H1 (cell line): ENCODE measurements at regions of chr17 and their contacts with region 1.

Region 1: GRCh38 chr17:32253117-32253611 is 12.5 kb upstream of the RHBDL3 start:
- DNase-seq: peak; percentile 59 to 92
- H3K4me3 ChIP-seq: no peak overlapping the region
- H3K27ac ChIP-seq: no peak overlapping the region
- H3K4me1 ChIP-seq: peaks cover 0 to 2% (median 1%) of the 10 kb centered on the region in 4 experiments; a peak in 4 of 7 replicates
- H3K27me3 ChIP-seq: no peaks in the 10 kb centered on the region; a peak in 1 of 7 replicates
- CTCF ChIP-seq: peak; percentile 98 to 99 (median 98)
- EP300 ChIP-seq: no peak
- POLR2A ChIP-seq: no peak
- RAD21 ChIP-seq: peak; percentile 100

Region 2: DNA sequence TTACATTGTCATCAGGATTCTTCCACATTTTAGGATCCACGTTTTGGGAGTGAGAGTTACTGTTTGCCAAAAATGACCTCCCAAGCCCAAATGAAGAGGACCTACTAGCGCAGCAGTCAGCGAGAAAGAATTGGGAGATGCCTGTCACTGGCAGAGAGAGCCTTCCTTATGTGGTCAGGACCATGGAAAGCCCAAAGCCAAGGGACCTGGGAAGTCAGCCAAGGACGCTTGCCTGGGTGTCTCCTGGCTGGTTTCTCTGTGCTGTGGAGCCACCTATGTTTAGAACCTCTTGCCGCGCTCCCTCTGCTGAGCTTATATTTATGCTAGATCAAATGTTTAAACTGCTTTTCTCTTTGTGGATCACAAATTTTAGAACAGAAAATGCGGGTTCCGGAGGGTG is 12.4 kb before region 1 on chr17:
- CTCF ChIA-PET with region 1: interaction called, 23 read pairs
- POLR2A ChIA-PET with region 1: interaction called, 3 read pairs
- DNase-seq: no peak
- H3K4me3 ChIP-seq: no peak overlapping the region
- H3K27ac ChIP-seq: no peak overlapping the region
- H3K4me1 ChIP-seq: peaks cover 0 to 8% (median 2%) of the 10 kb centered on the region in 4 experiments; a peak in 5 of 7 replicates
- H3K27me3 ChIP-seq: no peaks in the 10 kb centered on the region
- CTCF ChIP-seq: peak in 2 of 3 experiments; percentile 16 to 30; a peak in 2 of 4 replicates
- EP300 ChIP-seq: no peak
- POLR2A ChIP-seq: no peak
- RAD21 ChIP-seq: peak; percentile 32 to 58; a peak in 3 of 4 replicates

Region 3: DNA sequence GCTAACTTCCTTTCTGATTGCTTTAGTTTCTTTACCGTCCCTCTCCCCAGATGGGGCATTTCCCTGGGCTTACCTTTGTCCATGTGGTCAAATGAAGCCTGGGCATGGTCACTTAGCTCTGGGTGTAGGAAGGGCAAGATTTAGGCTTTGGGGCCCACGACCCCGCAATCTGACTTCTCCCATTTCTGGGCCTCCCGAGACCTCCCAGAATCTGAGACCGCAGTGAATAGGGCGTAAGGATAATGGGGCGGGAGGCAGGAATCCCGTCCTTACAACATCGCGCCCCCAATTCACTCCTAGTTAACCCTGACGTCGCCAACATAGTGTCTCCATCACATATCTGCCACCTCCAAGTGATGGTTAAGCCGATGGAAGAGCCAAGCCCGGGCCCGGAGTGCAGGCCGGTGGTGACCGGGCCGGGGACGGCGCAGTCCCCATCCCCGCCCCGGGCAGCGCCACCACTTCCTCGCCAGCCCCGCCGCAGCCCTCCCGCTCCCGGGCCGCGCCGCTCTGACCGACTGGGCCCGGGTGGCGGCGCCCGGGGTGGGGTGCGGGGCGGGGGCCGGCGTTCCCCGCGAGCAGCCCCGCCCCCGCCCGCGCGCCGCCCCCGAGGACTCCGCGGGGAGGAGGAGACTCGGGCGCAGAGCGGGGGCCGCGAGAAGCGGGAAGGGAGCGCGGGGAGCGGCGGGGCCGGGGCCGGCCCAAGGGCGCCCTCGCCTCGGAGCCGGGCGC is 12.2 kb after region 1 on chr17 and contains the start of gene RHBDL3:
- CTCF ChIA-PET with region 1: interaction called, 45 read pairs
- POLR2A ChIA-PET with region 1: no interaction called
- DNase-seq: no peak
- H3K4me3 ChIP-seq: peak within 1 kb of the TSS; percentile 42 to 87 (median 67)
- H3K27ac ChIP-seq: no peak within 1 kb of the TSS
- H3K4me1 ChIP-seq: peaks cover 7 to 24% (median 16%) of the 10 kb centered on the region in 4 experiments
- H3K27me3 ChIP-seq: peaks cover 0 to 34% (median 29%) of the 10 kb centered on the region in 4 experiments; a peak in 5 of 7 replicates
- CTCF ChIP-seq: no peak
- EP300 ChIP-seq: no peak
- POLR2A ChIP-seq: no peak
- RAD21 ChIP-seq: no peak
- total RNA-seq, gene RHBDL3: 11.8 and 12.2 TPM in 2 replicates

Region 4: DNA sequence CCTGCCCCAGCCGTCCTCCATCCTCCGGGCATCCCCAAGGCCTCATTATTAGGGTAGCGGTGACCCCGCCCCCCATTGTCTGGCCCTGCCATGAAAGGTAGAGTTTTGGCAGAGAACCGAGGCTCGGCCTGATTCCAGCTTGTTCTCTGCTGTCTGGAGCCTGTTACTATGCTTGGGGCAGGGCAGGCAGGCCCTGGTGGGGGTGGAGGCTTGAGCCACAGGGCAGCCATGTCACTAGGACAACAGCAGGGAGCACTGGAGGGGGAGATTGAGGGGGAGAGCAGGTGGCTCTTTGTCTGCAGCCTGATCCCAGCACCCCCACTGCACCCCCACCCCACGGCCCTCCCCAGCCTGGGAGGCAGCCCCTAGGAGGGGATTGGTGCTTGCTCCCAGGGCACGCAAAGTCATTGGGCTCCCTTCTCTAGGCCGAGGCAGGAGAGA is 27.9 kb after region 1 on chr17:
- CTCF ChIA-PET with region 1: interaction called, 11 read pairs
- POLR2A ChIA-PET with region 1: no interaction called
- DNase-seq: peak in 1 of 2 experiments; percentile 82
- H3K4me3 ChIP-seq: peak overlapping the region in 2 of 4 experiments; percentile 20 to 22; a peak in 1 of 8 replicates
- H3K27ac ChIP-seq: no peak overlapping the region
- H3K4me1 ChIP-seq: peaks cover 8 to 42% (median 32%) of the 10 kb centered on the region in 4 experiments
- H3K27me3 ChIP-seq: peaks cover 0 to 2% (median 0%) of the 10 kb centered on the region in 4 experiments; a peak in 2 of 7 replicates
- CTCF ChIP-seq: no peak
- EP300 ChIP-seq: no peak
- POLR2A ChIP-seq: no peak; a peak in 1 of 3 replicates
- RAD21 ChIP-seq: no peak

Region 5: GRCh38 chr17:32286518-32286900 is 33.3 kb after region 1 on chr17:
- CTCF ChIA-PET with region 1: interaction called, 17 read pairs
- POLR2A ChIA-PET with region 1: no interaction called
- DNase-seq: no peak
- H3K4me3 ChIP-seq: no peak overlapping the region
- H3K27ac ChIP-seq: no peak overlapping the region
- H3K4me1 ChIP-seq: peaks cover 14 to 32% (median 24%) of the 10 kb centered on the region in 4 experiments
- H3K27me3 ChIP-seq: no peaks in the 10 kb centered on the region; a peak in 1 of 7 replicates
- CTCF ChIP-seq: no peak
- EP300 ChIP-seq: no peak
- POLR2A ChIP-seq: no peak
- RAD21 ChIP-seq: no peak